WTC11 (cell line): ENCODE measurements at regions of chr6 and their contacts with region 1.

Region 1: DNA sequence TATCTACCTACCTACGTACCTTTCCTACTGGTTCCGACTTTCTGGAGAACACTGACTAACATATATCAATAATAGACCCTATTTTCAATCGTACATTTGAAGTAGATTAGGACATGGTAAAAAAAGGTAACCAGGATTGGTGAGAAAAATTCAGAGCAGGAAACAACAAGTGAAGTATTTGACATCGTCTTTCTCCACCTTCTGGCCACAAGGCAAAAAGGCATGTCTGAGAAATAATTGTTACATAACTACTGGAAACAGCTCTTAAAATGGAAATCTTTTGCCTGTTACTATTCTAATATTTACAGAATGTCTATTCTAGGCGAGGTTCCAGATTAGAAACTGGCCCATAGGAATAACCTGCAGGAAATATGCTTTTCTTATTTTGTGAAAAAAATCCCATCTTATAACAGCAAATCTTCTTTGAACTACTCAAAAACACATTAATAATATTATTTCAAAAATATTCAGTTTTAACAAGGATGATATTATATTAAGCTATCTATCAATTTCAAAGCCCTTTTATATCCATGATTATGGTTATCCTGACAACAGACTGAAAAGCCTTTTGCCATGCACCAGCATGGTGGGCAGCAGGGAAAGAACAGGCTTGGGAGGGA is 80.8 kb downstream of the RCAN2 start:
- DNase-seq: no peak
- ATAC-seq: no peak
- H3K4me3 Mint-ChIP-seq: no peak overlapping the region
- H3K27ac Mint-ChIP-seq: no peak overlapping the region
- H3K4me1 Mint-ChIP-seq: peaks cover 4% of the 10 kb centered on the region
- H3K27me3 Mint-ChIP-seq: no peaks in the 10 kb centered on the region
- CTCF ChIP-seq: peak; percentile 30; the same call in 1 of the 2 replicates

Region 2: GRCh38 chr6:46221222-46221793 is 189.1 kb before region 1 on chr6:
- CTCF ChIA-PET with region 1: interaction called, 42 read pairs
- POLR2A ChIA-PET with region 1: interaction called, 4 read pairs
- DNase-seq: no peak
- ATAC-seq: peak; percentile 81
- H3K4me3 Mint-ChIP-seq: no peak overlapping the region
- H3K27ac Mint-ChIP-seq: no peak overlapping the region
- H3K4me1 Mint-ChIP-seq: peaks cover 8% of the 10 kb centered on the region
- H3K27me3 Mint-ChIP-seq: peaks cover 11% of the 10 kb centered on the region
- CTCF ChIP-seq: peak; percentile 36; the same call in 1 of the 2 replicates